Activated CD8-positive, alpha-beta T cell treated with anti-CD3 and anti-CD28 coated beads, Interleukin-2, amount 10 ng/mL, durations not matched to agents 7 days and 5 days (primary cell): ENCODE measurements at regions of chr20 and their contacts with region 1.

Region 1: GRCh38 chr20:31712564-31713311 is 9.9 kb downstream of the BCL2L1 start:
- DNase-seq: no peak
- ATAC-seq: no peak
- H3K4me3 Mint-ChIP-seq: no peak overlapping the region
- H3K27ac Mint-ChIP-seq: peak overlapping the region; percentile 50
- H3K4me1 Mint-ChIP-seq: peaks cover 90% of the 10 kb centered on the region
- H3K27me3 Mint-ChIP-seq: no peaks in the 10 kb centered on the region

Region 2: DNA sequence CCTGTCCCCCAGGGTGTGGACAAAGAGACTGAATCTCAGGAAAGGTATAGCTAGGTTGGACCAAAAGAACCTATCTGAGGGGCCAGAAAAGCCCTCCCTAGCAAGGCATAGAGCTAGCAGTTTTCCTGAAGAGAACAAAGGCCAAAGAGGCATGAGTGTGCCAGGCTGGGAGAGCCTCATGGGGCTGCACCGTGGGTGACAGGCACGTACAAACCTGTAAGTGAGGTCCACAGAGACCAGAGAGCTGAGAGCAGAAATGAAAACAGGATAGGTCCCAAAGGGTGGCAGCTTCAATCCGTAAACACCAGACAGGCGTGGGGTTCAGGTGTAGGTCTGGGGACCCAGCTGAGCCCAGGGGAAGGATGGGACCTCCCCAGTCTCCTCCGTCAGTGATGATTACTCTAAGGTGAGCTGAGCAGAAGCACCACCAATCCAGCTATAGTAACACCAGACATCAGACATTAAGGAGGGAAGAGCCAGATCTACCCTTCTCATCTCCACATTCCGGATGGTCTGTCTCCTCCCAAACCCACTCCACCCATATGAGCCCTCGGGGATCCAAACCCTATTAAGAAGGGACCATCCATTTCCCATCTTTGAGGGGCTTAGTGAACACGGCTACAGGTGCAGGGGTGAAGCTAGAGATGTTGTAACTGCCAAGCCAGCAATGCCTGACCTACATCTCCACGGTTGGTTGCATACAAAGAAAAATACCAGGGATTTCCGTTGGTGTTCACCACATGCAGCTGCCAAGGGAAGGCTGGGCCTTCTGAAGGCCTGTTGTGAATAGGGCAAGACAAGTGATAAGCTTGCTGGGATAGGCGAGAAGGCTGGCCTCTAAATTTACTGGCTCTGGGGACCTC is 28.4 kb before region 1 on chr20:
- CTCF ChIA-PET with region 1: interaction called, 6 read pairs
- POLR2A ChIA-PET with region 1: interaction called, 193 read pairs
- DNase-seq: no peak
- ATAC-seq: peak; percentile 67
- H3K4me3 Mint-ChIP-seq: no peak overlapping the region
- H3K27ac Mint-ChIP-seq: peak overlapping the region; percentile 85
- H3K4me1 Mint-ChIP-seq: peaks cover 82% of the 10 kb centered on the region
- H3K27me3 Mint-ChIP-seq: no peaks in the 10 kb centered on the region

Region 3: DNA sequence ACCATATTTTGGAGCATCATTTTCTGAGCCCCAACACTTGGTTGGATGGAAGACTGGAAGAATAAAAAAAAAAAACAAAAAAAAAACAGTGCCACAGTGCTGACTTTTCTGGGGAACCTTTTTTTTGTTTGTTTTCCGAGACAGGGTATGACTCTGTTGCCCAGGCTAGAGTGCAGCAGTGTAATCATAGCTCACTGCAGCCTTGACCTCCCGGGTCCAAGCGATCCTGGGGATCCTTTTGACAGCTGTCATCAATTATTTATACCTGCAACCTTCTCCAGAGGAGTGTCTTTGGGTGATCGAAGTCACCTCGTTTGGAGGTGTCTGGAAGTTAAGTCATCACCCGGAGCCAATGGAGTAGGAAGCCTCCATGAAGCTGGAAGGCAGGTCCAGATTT is 18.6 kb after region 1 on chr20:
- CTCF ChIA-PET with region 1: no interaction called
- POLR2A ChIA-PET with region 1: no interaction called
- DNase-seq: no peak
- ATAC-seq: no peak
- H3K4me3 Mint-ChIP-seq: no peak overlapping the region
- H3K27ac Mint-ChIP-seq: no peak overlapping the region
- H3K4me1 Mint-ChIP-seq: peaks cover 2% of the 10 kb centered on the region
- H3K27me3 Mint-ChIP-seq: peaks cover 7% of the 10 kb centered on the region